ENCODE measurements at regions of chr21 and their contacts with region 1.

Region 1: GRCh38 chr21:38805328-38806152 is at the start of gene ETS2:
- DNase-seq: peak; percentile 96 to 97
- ATAC-seq: peak; percentile 93
- H3K4me3 ChIP-seq: peak within 1 kb of the TSS; percentile 96 to 99
- H3K27ac ChIP-seq: peak within 1 kb of the TSS; percentile 93
- H3K4me1 ChIP-seq: peaks cover 2 to 9% of the 10 kb centered on the region in 2 donors
- H3K27me3 ChIP-seq: no peaks in the 10 kb centered on the region
- total RNA-seq, gene ETS2: 145 to 232 TPM

Region 2: GRCh38 chr21:38679531-38679930 is 126.0 kb before region 1 on chr21:
- intact Hi-C with region 1: loop called in 1 of 2 experiments (anchors 10 kb)
- DNase-seq: no peak
- ATAC-seq: peak; percentile 62
- H3K4me3 ChIP-seq: no peak overlapping the region
- H3K27ac ChIP-seq: peak overlapping the region; percentile 46 to 47
- H3K4me1 ChIP-seq: peaks cover 5 to 6% of the 10 kb centered on the region in 2 donors
- H3K27me3 ChIP-seq: no peaks in the 10 kb centered on the region

Region 3: GRCh38 chr21:38766987-38767722 is 38.4 kb before region 1 on chr21:
- intact Hi-C with region 1: loop called (anchors 5 kb)
- DNase-seq: no peak
- ATAC-seq: no peak
- H3K4me3 ChIP-seq: no peak overlapping the region
- H3K27ac ChIP-seq: no peak overlapping the region
- H3K4me1 ChIP-seq: no peaks in the 10 kb centered on the region
- H3K27me3 ChIP-seq: no peaks in the 10 kb centered on the region

Region 4: GRCh38 chr21:39022863-39023693 is 217.5 kb after region 1 on chr21:
- intact Hi-C with region 1: loop called in 1 of 2 experiments (anchors 5 kb)
- DNase-seq: peak; percentile 88 to 94
- ATAC-seq: peak; percentile 77
- H3K4me3 ChIP-seq: no peak overlapping the region
- H3K27ac ChIP-seq: peak overlapping the region; percentile 9 to 92
- H3K4me1 ChIP-seq: peaks cover 0 to 4% of the 10 kb centered on the region in 2 donors
- H3K27me3 ChIP-seq: no peaks in the 10 kb centered on the region

Region 5: GRCh38 chr21:39114871-39115575 is 309.5 kb after region 1 on chr21:
- intact Hi-C with region 1: loop called in 1 of 2 experiments (anchors 5 kb)
- DNase-seq: peak; percentile 69 to 79
- ATAC-seq: peak; percentile 37
- H3K4me3 ChIP-seq: no peak overlapping the region
- H3K27ac ChIP-seq: peak overlapping the region in 1 of 2 donors; percentile 19
- H3K4me1 ChIP-seq: peaks cover 0 to 7% of the 10 kb centered on the region in 2 donors
- H3K27me3 ChIP-seq: no peaks in the 10 kb centered on the region

Region 6: GRCh38 chr21:39125752-39126485 is 320.4 kb after region 1 on chr21:
- intact Hi-C with region 1: loop called (anchors 5 kb)
- DNase-seq: no peak
- ATAC-seq: peak; percentile 88
- H3K4me3 ChIP-seq: no peak overlapping the region
- H3K27ac ChIP-seq: no peak overlapping the region
- H3K4me1 ChIP-seq: no peaks in the 10 kb centered on the region
- H3K27me3 ChIP-seq: no peaks in the 10 kb centered on the region

Measured in aorta (tissue), 5 donors.